ENCODE measurements at regions of chr3 and their contacts with region 1.

Region 1: GRCh38 chr3:150286390-150287147 is 121.5 kb upstream of the TSC22D2 start:
- DNase-seq: no peak
- ATAC-seq: peak; percentile 80 to 87
- H3K4me3 ChIP-seq: no peak overlapping the region
- H3K27ac ChIP-seq: no peak overlapping the region
- H3K4me1 ChIP-seq: no peaks in the 10 kb centered on the region
- H3K27me3 ChIP-seq: no peaks in the 10 kb centered on the region
- CTCF ChIP-seq: peak; percentile 25 to 62 (median 48)
- POLR2A ChIP-seq: no peak

Region 2: DNA sequence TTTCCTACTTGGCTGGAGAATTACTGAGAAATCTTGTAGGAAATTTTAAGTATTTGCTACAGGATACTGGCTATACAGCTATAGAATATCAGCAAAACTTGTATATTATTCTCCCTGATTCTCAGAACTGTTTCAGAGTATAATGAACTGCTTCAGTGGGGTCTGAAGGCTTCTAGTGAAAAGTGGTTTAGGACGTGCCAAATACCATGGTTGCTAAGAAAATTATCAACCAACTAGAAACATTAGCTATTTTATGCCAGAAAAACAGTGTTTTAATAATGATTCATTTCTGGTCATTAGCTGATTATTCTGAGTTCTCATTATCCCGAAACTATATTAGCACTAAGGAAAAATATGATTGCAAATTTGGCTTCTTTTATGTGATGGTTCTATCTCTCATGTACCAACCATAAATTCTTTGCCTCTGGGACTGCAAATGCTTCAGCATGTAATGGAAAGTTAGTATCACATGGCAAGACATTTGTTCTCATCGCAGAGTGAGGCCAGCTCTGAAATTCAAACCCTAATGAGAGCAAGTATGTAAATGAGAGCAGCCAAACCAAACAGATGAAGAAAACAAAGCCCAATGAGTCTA is 110.5 kb after region 1 on chr3:
- in situ Hi-C with region 1: no loop called
- intact Hi-C with region 1: no loop called
- DNase-seq: no peak
- ATAC-seq: no peak
- H3K4me3 ChIP-seq: no peak overlapping the region
- H3K27ac ChIP-seq: no peak overlapping the region
- H3K4me1 ChIP-seq: peaks cover 0 to 7% of the 10 kb centered on the region in 2 donors
- H3K27me3 ChIP-seq: no peaks in the 10 kb centered on the region
- CTCF ChIP-seq: no peak
- POLR2A ChIP-seq: no peak

Region 3: DNA sequence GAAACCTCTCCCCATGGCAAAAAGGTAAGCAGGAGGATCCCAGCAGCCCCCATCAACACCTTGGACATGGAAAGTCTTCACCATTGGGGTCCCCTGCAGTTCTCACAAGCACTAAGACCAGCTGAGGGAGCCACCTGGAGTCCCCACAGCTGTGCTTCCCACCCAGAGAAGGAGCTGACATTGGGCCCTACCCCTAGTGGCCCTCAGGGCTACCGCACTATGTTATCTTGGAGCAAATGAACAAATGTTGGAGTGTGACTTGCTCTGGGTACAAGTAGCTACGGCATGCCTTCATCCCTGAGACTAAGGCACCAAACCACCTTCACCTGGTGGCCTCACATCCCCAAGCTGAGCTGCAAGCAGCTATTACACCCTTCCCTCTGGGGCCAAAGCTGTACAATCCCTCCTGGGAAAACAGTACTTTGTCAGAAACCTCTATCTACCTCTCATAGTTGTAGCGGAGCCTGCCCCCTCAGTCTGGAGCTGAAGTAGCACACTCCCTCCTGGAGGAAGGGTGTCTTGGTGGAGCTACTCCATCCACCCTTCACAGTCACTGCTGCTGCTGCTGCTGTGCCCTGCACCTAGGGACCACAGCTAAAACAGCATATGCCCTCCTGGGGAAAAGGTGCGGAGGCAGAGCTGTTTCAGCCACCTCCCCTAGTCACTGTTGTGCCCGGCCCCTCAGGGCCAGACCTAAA is 217.0 kb after region 1 on chr3:
- in situ Hi-C with region 1: loop called (anchors 5 to 25 kb)
- intact Hi-C with region 1: no loop called
- DNase-seq: no peak
- ATAC-seq: no peak
- H3K4me3 ChIP-seq: no peak overlapping the region
- H3K27ac ChIP-seq: no peak overlapping the region
- H3K4me1 ChIP-seq: no peaks in the 10 kb centered on the region
- H3K27me3 ChIP-seq: no peaks in the 10 kb centered on the region
- CTCF ChIP-seq: no peak
- POLR2A ChIP-seq: no peak

Region 4: GRCh38 chr3:150521463-150521862 is 234.9 kb after region 1 on chr3:
- in situ Hi-C with region 1: loop called in 1 of 4 experiments (anchors 25 kb)
- intact Hi-C with region 1: no loop called
- DNase-seq: no peak
- ATAC-seq: no peak
- H3K4me3 ChIP-seq: no peak overlapping the region
- H3K27ac ChIP-seq: no peak overlapping the region
- H3K4me1 ChIP-seq: no peaks in the 10 kb centered on the region
- H3K27me3 ChIP-seq: no peaks in the 10 kb centered on the region
- CTCF ChIP-seq: no peak
- POLR2A ChIP-seq: no peak

Region 5: DNA sequence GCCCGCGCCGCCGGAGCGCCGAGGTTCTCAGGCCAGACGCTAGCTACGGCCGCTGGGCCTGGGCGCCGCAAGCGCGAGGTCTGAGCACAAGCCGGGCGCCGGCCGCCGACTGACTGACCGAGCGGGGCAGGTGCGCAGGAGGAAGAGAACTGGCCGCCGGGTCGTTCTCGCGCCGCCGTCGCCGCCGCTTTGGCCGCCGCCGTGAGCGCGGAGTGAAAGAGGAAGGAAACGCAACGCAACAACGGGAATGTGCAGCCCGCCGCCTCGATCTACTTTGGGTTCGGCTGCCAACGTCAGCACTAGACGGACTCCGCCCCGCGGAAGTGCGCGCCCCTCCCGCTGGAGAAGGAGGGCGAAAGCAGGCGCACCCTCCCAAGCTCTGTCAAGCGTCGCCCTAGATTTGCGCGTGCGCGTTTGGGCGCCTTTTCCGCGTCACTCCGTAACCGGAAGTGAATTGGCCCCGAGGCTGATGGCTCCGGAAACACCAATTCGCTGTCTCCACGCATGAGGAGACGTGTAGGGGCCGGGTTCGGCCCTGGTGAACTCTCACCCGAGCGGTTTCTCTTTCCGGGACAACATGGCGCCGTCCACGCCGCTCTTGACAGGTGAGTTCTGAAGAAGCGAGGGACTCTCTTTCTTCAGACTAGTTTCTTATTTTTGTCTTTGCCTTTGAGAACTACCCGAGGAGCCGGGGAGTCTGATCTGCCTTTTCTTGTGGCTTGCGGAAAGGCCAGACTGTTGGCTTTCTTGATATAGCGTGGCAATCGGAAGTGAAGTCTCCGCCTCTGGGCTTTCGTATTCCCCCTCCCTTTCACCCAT is 259.9 kb after region 1 on chr3 and contains the starts of genes EIF2A and SERP1:
- in situ Hi-C with region 1: no loop called
- intact Hi-C with region 1: no loop called
- DNase-seq: peak; percentile 97 to 98
- ATAC-seq: peak; percentile 93
- H3K4me3 ChIP-seq: peak within 1 kb of the TSS; percentile 79 to 98 (median 94)
- H3K27ac ChIP-seq: peak within 1 kb of the TSS; percentile 94 to 100 (median 98)
- H3K4me1 ChIP-seq: peaks cover 32 to 38% of the 10 kb centered on the region in 2 donors
- H3K27me3 ChIP-seq: no peaks in the 10 kb centered on the region
- CTCF ChIP-seq: peak in 1 of 5 experiments; percentile 5
- POLR2A ChIP-seq: peak; percentile 95 to 96
- total RNA-seq, gene EIF2A: 150 to 168 (median 163) TPM
- total RNA-seq, gene SERP1: 25.3 to 52.7 (median 36.3) TPM

Region 6: GRCh38 chr3:150970665-150971324 is 684.2 kb after region 1 on chr3:
- in situ Hi-C with region 1: no loop called
- intact Hi-C with region 1: no loop called
- DNase-seq: no peak
- ATAC-seq: no peak
- H3K4me3 ChIP-seq: no peak overlapping the region
- H3K27ac ChIP-seq: no peak overlapping the region
- H3K4me1 ChIP-seq: no peaks in the 10 kb centered on the region
- H3K27me3 ChIP-seq: no peaks in the 10 kb centered on the region
- CTCF ChIP-seq: no peak
- POLR2A ChIP-seq: no peak